ENCODE measurements at regions of chr6 and their contacts with region 1.

Region 1: GRCh38 chr6:2859185-2859700 is 17.6 kb upstream of the SERPINB1 start:
- DNase-seq: peak in 5 of 9 donors; percentile 78 to 84 (median 80)
- ATAC-seq: no peak
- H3K4me3 ChIP-seq: peak overlapping the region; percentile 56
- H3K4me3 Mint-ChIP-seq: peak overlapping the region; percentile 79 to 98 (median 88)
- H3K27ac ChIP-seq: peak overlapping the region; percentile 86
- H3K27ac Mint-ChIP-seq: peak overlapping the region; percentile 98 to 100 (median 99)
- H3K4me1 ChIP-seq: peaks cover 81 to 84% of the 10 kb centered on the region in 2 donors
- H3K4me1 Mint-ChIP-seq: peaks cover 66 to 95% (median 89%) of the 10 kb centered on the region in 7 donors
- H3K27me3 ChIP-seq: no peaks in the 10 kb centered on the region
- H3K27me3 Mint-ChIP-seq: no peaks in the 10 kb centered on the region

Region 2: DNA sequence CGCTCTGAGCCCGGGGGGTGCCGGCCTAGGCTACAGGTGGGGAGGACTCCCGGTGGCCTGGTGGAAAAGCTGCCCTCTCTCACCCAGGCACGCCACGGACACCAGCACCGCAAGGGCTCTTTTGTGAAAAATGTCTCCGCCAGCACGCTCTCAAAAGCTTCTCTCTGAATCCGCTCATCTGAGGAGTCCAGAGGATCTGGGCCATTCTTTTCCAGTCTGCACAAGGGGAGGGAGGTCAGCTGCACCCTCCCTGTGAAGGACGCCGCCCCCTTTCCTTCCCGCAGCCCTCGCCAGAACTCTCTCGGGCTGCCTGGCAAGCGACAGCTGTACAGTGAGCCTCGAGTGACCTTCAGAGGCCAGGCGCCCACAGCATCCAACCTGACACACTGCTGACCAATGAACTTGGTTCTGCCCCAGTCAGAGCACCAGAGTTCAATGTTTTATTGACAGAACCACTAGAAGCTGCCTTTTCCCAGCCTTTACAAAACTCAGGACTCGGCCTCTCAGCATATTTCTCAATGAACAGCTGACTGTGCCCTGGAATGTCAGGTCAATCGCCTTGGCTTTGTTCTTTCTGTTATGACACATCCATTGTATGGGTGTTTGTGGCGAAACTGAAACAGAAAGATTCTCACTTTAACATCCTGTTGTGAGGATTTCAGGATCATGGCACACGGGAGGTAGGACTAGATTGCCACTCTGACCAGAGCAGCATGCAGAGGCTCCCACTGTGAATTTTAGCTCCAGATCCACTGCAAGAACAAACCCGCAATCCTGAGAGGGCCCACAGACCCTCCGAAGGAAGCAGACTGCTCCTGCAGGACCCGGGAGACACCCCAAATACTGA is 17.2 kb after region 1 on chr6:
- CTCF ChIA-PET with region 1: interaction called, 20 read pairs
- POLR2A ChIA-PET with region 1: no interaction called
- intact Hi-C with region 1: loop called (anchors 1 kb)
- DNase-seq: no peak
- ATAC-seq: peak; percentile 38
- H3K4me3 ChIP-seq: peak overlapping the region; percentile 50
- H3K4me3 Mint-ChIP-seq: peak overlapping the region; percentile 79 to 87 (median 84)
- H3K27ac ChIP-seq: peak overlapping the region; percentile 71
- H3K27ac Mint-ChIP-seq: peak overlapping the region; percentile 82 to 98 (median 91)
- H3K4me1 ChIP-seq: peaks cover 54 to 55% of the 10 kb centered on the region in 2 donors
- H3K4me1 Mint-ChIP-seq: peaks cover 63 to 83% (median 79%) of the 10 kb centered on the region in 7 donors
- H3K27me3 ChIP-seq: no peaks in the 10 kb centered on the region
- H3K27me3 Mint-ChIP-seq: no peaks in the 10 kb centered on the region